ENCODE measurements at regions of chr11 and their contacts with region 1.

Region 1: GRCh38 chr11:28366549-28367346 is 258.6 kb downstream of the METTL15 start:
- DNase-seq: no peak
- ATAC-seq: peak; percentile 87

Region 2: GRCh38 chr11:28476049-28476448 is 109.3 kb after region 1 on chr11:
- intact Hi-C with region 1: loop called (anchors 10 kb)
- DNase-seq: no peak
- ATAC-seq: peak; percentile 84

Region 3: DNA sequence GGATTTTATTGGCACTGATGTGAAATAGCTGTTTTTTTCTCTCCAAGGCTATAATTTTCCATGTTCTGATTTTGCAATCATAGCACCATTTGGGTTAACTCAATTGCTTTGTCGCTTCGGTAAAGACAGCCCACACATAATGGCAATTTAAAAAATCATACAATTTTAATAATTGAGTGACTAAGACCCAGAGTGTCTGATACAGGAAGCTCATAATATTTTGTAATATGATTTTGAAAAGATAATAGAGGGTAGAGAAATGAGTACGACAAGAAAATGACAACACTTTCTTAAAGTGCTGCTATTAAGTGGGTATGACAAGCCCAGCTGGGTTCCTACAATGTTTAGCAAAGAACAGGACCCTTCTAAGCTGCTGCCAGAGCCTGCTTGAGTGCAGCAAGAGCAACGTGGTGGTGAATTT is 180.6 kb after region 1 on chr11:
- intact Hi-C with region 1: no loop called
- DNase-seq: no peak
- ATAC-seq: peak; percentile 34

Region 4: DNA sequence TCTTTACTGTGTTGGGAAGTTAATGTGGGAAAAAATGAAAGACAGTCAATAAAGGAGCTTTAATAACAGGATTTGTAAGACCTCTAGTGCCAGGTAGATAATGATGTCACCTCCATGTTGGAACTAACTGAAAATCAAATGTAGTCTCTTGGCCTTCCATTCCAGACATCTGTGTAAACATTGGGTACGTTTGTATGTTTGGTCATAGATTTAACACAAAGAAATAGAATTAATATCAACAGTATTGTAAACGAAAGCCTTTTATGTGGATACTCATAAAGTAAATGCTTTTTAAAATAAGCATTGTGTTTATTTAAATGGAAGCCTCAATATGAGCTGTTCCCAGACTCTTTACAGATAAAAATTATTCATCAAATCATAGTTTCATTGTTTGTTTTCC is 347.1 kb after region 1 on chr11:
- intact Hi-C with region 1: loop called (anchors 5 kb)
- DNase-seq: no peak
- ATAC-seq: no peak

Measured in Right ventricle myocardium inferior (tissue), 1 donor.